ENCODE measurements at regions of chr19 and their contacts with region 1.

Region 1: GRCh38 chr19:38333245-38333644 is 2.4 kb upstream of the CATSPERG start:
- DNase-seq: peak; percentile 36
- H3K4me3 ChIP-seq: no peak overlapping the region
- H3K27ac ChIP-seq: no peak overlapping the region
- H3K4me1 ChIP-seq: no peaks in the 10 kb centered on the region
- H3K27me3 ChIP-seq: no peaks in the 10 kb centered on the region

Region 2: DNA sequence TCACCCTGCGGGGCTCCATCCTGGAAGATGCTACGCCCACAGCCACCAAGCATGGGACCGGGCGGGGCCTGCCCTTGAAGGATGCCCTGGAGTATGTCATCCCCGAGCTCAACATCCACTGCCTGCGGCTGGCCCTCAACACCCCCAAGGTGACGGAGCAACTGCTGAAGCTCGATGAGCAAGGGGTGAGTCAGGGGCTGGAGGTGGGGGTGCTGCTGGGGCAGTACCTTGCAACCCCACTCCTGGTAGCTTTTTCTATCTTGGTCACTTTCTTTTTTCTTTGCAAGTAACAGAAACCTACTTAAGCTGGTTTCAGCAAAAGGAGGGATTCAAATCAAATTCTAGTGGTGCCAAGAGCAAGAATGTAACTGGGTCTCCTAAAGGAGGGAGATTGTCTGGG is 233.3 kb before region 1 on chr19:
- in situ Hi-C with region 1: no loop called
- DNase-seq: peak; percentile 4
- H3K4me3 ChIP-seq: no peak overlapping the region
- H3K27ac ChIP-seq: no peak overlapping the region
- H3K4me1 ChIP-seq: no peaks in the 10 kb centered on the region
- H3K27me3 ChIP-seq: no peaks in the 10 kb centered on the region

Region 3: GRCh38 chr19:38250821-38251563 is 82.3 kb before region 1 on chr19:
- in situ Hi-C with region 1: loop called (anchors 5 kb)
- DNase-seq: peak; percentile 28
- H3K4me3 ChIP-seq: peak overlapping the region; percentile 4; the same call in 1 of the 2 replicates
- H3K27ac ChIP-seq: no peak overlapping the region
- H3K4me1 ChIP-seq: peaks cover 15% of the 10 kb centered on the region
- H3K27me3 ChIP-seq: no peaks in the 10 kb centered on the region

Region 4: DNA sequence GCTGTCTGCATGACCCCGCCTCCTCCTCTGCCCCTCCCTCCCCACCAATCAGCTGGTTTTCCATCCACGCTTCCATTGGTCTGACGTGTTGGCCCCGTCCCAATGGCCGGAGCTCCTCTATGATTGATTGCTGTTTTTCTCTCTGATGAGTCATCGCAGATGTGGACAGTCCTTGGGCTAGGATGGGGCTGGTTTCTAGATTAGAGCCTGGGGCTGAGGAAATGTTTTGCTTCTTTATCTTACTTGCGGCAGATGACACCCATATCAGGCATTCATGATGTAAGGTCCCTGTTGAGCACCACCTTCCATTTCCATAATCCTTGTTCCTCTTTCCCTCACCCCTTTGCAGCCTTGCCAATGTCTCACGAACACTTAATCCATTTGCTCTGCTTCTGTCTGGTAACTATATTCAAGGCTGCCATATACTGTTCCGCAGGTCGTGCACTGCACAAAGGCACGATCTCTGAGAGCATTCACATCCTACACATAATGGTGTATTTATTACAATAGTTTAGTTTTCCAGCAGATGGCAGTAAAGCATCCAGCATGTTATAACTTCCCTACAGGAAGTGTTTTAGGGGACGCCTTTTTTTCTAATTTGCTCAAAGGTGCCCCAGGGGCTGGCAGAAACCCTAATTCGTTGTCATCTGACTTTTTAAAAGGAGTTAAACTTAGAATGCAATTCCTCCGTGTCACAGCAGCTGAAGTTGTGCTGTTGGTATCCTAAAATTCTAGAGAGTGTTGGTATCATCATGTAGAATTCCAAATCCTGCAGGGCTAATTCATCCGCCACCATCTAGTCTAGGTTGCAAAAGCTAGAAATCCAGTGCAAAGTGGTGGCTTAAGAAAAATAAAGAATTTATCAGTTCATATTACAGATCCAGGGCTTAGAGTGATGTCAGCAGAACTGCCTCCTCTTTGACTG is 211.1 kb after region 1 on chr19:
- in situ Hi-C with region 1: no loop called
- DNase-seq: peak; percentile 89
- H3K4me3 ChIP-seq: peak overlapping the region; percentile 49
- H3K27ac ChIP-seq: peak overlapping the region; percentile 17
- H3K4me1 ChIP-seq: 0 out of 2 replicates have a peak, but pooled peaks cover 5% of the 10 kb centered on the region
- H3K27me3 ChIP-seq: no peaks in the 10 kb centered on the region; the same call in 1 of the 2 replicates

Region 5: DNA sequence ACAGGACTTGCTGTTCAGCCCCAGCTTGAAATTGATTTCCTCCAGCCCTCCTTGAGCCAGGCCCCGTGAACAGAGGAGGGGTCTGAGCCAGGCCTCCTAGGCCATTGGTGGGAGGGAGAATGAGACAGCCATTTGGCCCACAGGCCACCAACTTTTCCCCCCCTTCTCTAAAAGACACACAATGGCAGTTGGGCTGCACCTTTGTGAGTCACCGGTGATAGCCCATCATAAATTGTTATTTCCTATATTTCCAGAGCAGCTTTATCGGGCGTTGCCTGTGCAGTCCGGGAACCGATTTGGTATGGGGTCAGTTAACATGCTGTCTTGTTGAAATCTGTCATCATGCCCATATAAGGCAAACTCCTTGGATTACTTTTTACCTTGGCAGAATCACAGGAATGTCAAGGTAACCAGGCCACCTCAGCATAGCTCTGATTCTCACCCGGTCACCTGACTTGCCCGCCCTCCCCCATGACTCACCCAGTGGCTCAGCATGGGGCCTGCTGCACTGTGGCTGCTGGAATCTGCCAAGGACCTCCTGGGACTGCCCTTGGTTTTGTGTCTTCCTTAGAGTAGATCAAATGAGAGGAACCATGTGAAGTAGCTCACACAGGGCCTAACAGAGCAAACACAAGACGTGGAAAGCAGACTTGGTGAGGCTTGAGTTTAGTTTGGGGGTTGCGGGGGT is 350.3 kb after region 1 on chr19:
- in situ Hi-C with region 1: no loop called
- DNase-seq: peak; percentile 93
- H3K4me3 ChIP-seq: peak overlapping the region; percentile 26; the same call in 1 of the 2 replicates
- H3K27ac ChIP-seq: peak overlapping the region; percentile 99
- H3K4me1 ChIP-seq: peaks cover 79% of the 10 kb centered on the region
- H3K27me3 ChIP-seq: no peaks in the 10 kb centered on the region

Region 6: DNA sequence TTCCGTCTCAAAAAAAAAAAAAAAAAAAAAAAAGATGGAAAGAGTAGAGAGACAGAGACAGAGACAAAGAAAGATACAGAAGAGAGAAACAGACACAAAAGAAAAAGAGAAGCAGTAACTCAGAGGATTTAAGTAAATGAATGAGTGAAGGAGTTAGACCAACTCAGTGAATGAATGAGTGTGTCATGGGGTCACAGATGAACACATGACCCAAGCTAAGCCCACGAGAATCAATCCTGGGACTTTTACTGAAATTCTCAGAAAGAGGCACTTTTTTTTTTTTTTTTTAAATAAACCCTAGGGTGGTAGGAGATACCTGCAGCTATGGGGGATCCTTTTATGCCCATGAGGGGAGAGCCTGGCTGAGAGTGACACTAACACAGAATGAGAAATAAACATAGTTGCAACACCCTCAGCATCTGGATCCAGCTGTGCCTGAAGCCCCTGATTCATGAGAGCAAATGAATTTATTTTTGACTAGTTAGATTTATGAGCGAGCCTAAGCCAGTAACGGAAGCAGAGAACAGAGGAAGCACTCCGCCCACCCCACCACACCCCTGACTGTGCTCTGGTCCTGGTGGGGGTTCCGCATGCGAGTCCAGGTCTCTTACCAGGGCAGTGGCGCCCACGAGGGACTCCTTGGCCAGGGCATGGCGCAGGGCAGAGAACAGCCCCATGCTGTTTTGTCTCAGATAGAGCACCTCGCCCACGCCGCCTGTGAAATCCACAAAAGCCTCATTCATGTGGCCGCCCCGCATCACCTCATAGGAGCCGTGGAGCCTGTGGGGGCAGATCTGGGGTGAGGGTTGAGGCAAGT is 406.4 kb after region 1 on chr19:
- in situ Hi-C with region 1: no loop called
- DNase-seq: no peak
- H3K4me3 ChIP-seq: no peak overlapping the region
- H3K27ac ChIP-seq: no peak overlapping the region
- H3K4me1 ChIP-seq: no peaks in the 10 kb centered on the region
- H3K27me3 ChIP-seq: no peaks in the 10 kb centered on the region